HepG2 (cell line): ENCODE measurements at regions of chr2 and their contacts with region 1.

Region 1: GRCh38 chr2:239201531-239201876 is 199.3 kb downstream of the HDAC4 start:
- DNase-seq: no peak
- ATAC-seq: no peak
- H3K4me3 ChIP-seq: no peak overlapping the region
- H3K27ac ChIP-seq: no peak overlapping the region
- H3K4me1 ChIP-seq: no peaks in the 10 kb centered on the region
- H3K27me3 ChIP-seq: no peaks in the 10 kb centered on the region
- CTCF ChIP-seq: no peak
- EP300 ChIP-seq: no peak
- POLR2A ChIP-seq: no peak
- RAD21 ChIP-seq: no peak

Region 2: DNA sequence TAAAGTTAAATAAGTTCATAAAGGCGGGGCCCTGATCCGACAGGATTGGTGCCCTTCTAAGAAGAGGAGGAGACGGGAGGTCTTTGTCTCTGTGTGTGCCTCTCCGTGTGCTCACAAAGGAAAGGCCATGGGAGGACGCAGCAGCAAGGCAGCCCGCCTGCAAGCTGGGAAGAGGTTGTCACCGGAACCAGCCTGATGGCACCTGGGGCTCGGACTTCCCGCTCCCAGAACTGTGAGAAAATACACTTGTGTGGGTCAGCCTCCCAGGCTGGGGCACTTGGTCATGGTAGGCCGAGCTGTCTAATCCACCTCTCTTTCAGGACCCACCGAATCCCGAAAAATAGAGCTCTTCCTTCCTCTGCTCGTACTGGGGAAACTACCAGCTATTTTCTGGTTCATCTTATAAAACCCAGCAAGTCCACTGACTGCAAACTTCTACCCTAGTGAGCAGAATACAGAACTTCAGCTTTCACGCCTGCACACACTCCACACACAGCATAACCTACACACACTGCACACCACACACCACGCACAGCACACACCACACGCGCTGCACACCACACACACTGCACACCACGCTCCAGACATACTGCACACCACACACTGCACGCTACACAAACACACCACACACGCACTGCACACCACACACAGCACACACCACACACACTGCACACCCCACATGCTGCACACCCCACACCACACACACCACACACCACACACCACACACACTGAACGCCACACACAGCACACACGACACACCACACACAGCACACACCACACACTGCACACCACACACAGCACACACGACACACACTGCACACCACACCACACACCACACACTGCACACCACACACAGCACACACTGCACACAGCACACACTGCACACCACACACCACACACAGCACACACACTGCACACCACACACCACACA is 716.7 kb before region 1 on chr2:
- CTCF ChIA-PET with region 1: no interaction called
- POLR2A ChIA-PET with region 1: no interaction called
- in situ Hi-C with region 1: no loop called
- intact Hi-C with region 1: no loop called
- DNase-seq: no peak
- ATAC-seq: peak; percentile 39
- H3K4me3 ChIP-seq: no peak overlapping the region
- H3K27ac ChIP-seq: no peak overlapping the region
- H3K4me1 ChIP-seq: no peaks in the 10 kb centered on the region
- H3K27me3 ChIP-seq: no peaks in the 10 kb centered on the region
- CTCF ChIP-seq: no peak
- EP300 ChIP-seq: no peak
- POLR2A ChIP-seq: no peak
- RAD21 ChIP-seq: no peak

Region 3: GRCh38 chr2:238974501-238975166 is 226.9 kb before region 1 on chr2:
- CTCF ChIA-PET with region 1: no interaction called
- POLR2A ChIA-PET with region 1: no interaction called
- in situ Hi-C with region 1: no loop called
- intact Hi-C with region 1: no loop called
- DNase-seq: no peak
- ATAC-seq: no peak
- H3K4me3 ChIP-seq: no peak overlapping the region
- H3K27ac ChIP-seq: no peak overlapping the region
- H3K4me1 ChIP-seq: no peaks in the 10 kb centered on the region
- H3K27me3 ChIP-seq: peaks cover 0 to 13% of the 10 kb centered on the region in 2 experiments; a peak in 1 of 5 replicates
- CTCF ChIP-seq: no peak; the same call in 1 of the 2 replicates
- EP300 ChIP-seq: no peak
- POLR2A ChIP-seq: no peak
- RAD21 ChIP-seq: no peak

Region 4: DNA sequence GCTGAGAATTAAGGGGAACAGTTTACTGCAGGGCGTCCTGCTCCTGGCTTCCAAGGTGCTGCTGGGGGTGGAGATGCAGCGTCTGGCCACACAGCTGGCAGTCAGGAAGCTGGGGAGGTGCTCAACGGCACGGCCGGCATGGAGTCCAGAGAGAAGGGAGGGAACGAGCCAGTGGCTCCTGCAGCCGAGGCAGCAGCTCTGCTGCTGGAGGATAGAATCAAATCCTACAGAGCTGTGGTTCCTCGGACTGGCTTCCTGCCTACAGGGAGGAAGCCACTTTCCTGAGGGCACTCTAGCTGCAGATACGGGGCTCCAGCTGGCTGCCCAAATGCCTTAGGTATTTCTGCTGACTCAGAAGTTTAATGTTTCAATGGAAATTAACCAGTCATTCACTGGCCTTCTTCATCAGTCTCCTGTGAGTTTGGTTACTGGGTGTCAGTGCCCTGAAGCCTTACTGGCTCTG is 87.4 kb before region 1 on chr2:
- CTCF ChIA-PET with region 1: no interaction called
- POLR2A ChIA-PET with region 1: no interaction called
- in situ Hi-C with region 1: no loop called
- intact Hi-C with region 1: no loop called
- DNase-seq: no peak
- ATAC-seq: no peak
- H3K4me3 ChIP-seq: no peak overlapping the region
- H3K27ac ChIP-seq: no peak overlapping the region
- H3K4me1 ChIP-seq: peaks cover 12% of the 10 kb centered on the region
- H3K27me3 ChIP-seq: no peaks in the 10 kb centered on the region
- CTCF ChIP-seq: no peak
- EP300 ChIP-seq: no peak
- POLR2A ChIP-seq: no peak
- RAD21 ChIP-seq: no peak

Region 5: GRCh38 chr2:240983361-240983995 is 1782.0 kb after region 1 on chr2:
- CTCF ChIA-PET with region 1: no interaction called
- POLR2A ChIA-PET with region 1: no interaction called
- in situ Hi-C with region 1: no loop called
- intact Hi-C with region 1: loop called (anchors 10 kb)
- DNase-seq: no peak
- ATAC-seq: no peak
- H3K4me3 ChIP-seq: no peak overlapping the region
- H3K27ac ChIP-seq: no peak overlapping the region
- H3K4me1 ChIP-seq: peaks cover 34% of the 10 kb centered on the region
- H3K27me3 ChIP-seq: peaks cover 8 to 32% of the 10 kb centered on the region in 2 experiments; a peak in 3 of 5 replicates
- CTCF ChIP-seq: no peak
- EP300 ChIP-seq: no peak
- POLR2A ChIP-seq: no peak
- RAD21 ChIP-seq: no peak